Heart right ventricle (tissue), 16 donors: ENCODE measurements at regions of chr5 and their contacts with region 1.

Region 1: GRCh38 chr5:54387659-54388232 is 67.8 kb upstream of the HSPB3 start:
- DNase-seq: no peak
- ATAC-seq: peak; percentile 79 to 91 (median 84)
- H3K4me3 ChIP-seq: no peak overlapping the region
- H3K27ac ChIP-seq: peak overlapping the region in 6 of 10 donors; percentile 23 to 74 (median 55)
- H3K4me1 ChIP-seq: peaks cover 0 to 48% (median 28%) of the 10 kb centered on the region in 9 donors
- H3K27me3 ChIP-seq: no peaks in the 10 kb centered on the region
- CTCF ChIP-seq: no peak

Region 2: DNA sequence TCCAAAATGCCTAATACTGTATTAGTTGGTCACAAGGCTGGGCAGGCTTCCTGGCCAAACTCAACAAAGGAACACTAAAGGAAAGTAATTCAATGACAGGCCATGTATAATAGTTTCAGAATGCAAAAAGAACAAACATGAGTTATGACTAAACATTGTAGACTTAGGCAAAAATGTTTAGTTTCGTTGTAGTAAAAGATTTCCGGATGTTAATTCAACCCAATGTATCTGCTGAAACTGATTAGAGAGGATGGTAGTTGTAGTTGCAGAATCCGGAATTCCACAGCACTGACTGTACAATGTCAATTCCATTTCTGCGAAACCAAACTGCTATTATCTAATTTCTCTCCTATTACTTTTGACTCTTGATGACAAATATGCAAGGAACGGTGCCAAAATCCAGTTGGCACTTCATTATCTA is 1025.2 kb before region 1 on chr5:
- intact Hi-C with region 1: loop called in 1 of 10 experiments (anchors 5 kb)
- DNase-seq: peak in 1 of 2 donors; percentile 26
- ATAC-seq: peak in 4 of 8 donors; percentile 37 to 61 (median 59)
- H3K4me3 ChIP-seq: no peak overlapping the region
- H3K27ac ChIP-seq: peak overlapping the region in 6 of 10 donors; percentile 11 to 65 (median 54)
- H3K4me1 ChIP-seq: peaks cover 0 to 15% (median 0%) of the 10 kb centered on the region in 9 donors
- H3K27me3 ChIP-seq: no peaks in the 10 kb centered on the region
- CTCF ChIP-seq: no peak

Region 3: GRCh38 chr5:54713923-54714581 is 326.3 kb after region 1 on chr5:
- intact Hi-C with region 1: no loop called
- DNase-seq: no peak
- ATAC-seq: peak in 2 of 8 donors; percentile 47 to 48
- H3K4me3 ChIP-seq: no peak overlapping the region
- H3K27ac ChIP-seq: peak overlapping the region in 1 of 10 donors; percentile 13
- H3K4me1 ChIP-seq: peaks cover 2 to 21% (median 8%) of the 10 kb centered on the region in 9 donors
- H3K27me3 ChIP-seq: no peaks in the 10 kb centered on the region
- CTCF ChIP-seq: no peak